ENCODE measurements at regions of chr11 and their contacts with region 1.

Region 1: GRCh38 chr11:2151500-2152257 is 9.3 kb downstream of the INS start:
- DNase-seq: peak; percentile 87
- H3K27ac ChIP-seq: peak overlapping the region; percentile 51
- CTCF ChIP-seq: peak; percentile 79

Region 2: GRCh38 chr11:1694064-1694845 is 457.4 kb before region 1 on chr11:
- CTCF ChIA-PET with region 1: interaction called, 18 read pairs
- POLR2A ChIA-PET with region 1: no interaction called
- DNase-seq: peak; percentile 82
- H3K27ac ChIP-seq: peak overlapping the region; percentile 76
- CTCF ChIP-seq: peak; percentile 77

Region 3: DNA sequence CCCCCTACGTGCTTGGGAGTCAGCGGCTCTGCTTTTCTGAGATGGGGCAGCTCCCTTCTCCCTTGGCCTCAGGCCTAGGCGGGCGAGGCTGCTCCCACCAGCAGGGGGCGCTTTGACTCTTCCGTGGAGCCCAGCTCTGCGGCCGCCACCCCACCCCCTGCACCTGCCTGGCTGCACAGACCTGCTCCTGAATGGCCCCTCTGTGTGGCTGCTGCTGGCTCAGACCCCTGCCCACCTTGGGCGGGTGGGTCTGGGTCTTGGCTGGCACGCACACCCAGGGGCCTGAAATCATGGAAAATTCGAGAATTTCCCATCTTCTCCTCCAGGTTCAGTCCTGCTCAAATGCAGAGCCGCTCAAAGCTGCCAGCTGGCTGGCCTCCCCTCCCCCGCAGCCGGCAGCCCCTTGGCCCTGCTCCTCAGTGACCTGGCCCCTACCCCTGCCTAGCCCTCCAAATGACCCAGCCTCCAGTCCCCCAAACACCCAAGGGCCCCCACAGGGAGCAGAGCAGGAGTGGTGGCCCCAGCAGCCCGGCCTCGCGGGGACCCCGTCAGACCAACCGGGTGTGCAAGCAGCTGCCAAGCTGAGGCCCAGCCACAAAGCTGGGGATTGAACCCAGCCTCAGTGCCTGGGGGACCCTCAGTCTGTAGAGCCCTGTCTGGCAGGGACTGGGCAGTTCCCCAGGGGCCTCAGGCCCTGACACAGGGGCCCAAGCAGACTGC is 269.0 kb before region 1 on chr11:
- CTCF ChIA-PET with region 1: interaction called, 20 read pairs
- POLR2A ChIA-PET with region 1: no interaction called
- DNase-seq: peak; percentile 82
- H3K27ac ChIP-seq: peak overlapping the region; percentile 100
- CTCF ChIP-seq: peak; percentile 88

Region 4: DNA sequence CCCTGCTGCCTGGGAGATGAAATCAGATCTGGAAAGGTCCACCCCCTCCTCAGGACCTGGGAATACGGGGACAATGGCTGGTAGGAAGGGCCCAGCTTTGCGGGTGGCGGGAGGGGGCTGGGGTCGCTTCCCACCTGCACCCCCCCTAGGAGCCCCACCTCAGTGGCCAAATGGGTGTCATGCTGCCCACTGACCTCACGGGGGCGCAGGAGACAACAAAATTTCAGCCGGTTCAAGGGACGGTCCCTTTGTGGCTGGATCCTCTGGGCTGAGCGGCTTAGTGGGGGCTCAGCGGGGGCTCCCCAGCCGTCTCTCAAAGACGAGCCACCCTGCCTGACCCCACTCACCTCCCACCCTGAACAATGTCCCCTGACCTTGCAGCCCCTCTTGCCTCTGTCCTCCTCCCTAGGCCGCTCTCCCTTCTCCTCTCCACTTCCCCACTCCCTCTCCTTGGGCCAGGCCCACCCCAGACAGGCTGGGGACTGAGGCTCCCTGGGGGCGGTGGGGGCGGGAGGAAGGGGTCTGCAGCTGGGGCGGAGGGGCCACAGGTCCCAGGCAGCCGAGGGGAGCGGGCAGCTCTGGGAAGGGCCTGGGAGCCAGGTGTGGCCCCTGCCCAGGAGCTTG is 114.7 kb before region 1 on chr11:
- CTCF ChIA-PET with region 1: interaction called, 293 read pairs
- POLR2A ChIA-PET with region 1: no interaction called
- DNase-seq: no peak
- H3K27ac ChIP-seq: no peak overlapping the region
- CTCF ChIP-seq: no peak

Region 5: GRCh38 chr11:2114430-2115241 is 37.0 kb before region 1 on chr11:
- CTCF ChIA-PET with region 1: interaction called, 10 read pairs
- POLR2A ChIA-PET with region 1: no interaction called
- DNase-seq: no peak
- H3K27ac ChIP-seq: no peak overlapping the region
- CTCF ChIP-seq: no peak

Region 6: GRCh38 chr11:2194877-2195755 is 43.4 kb after region 1 on chr11:
- CTCF ChIA-PET with region 1: no interaction called
- POLR2A ChIA-PET with region 1: no interaction called
- DNase-seq: no peak
- H3K27ac ChIP-seq: peak overlapping the region; percentile 82
- CTCF ChIP-seq: peak; percentile 88

Measured in RWPE1 (cell line).